Activated CD8-positive, alpha-beta T cell treated with anti-CD3 and anti-CD28 coated beads, Interleukin-2, amount 10 ng/mL, durations not matched to agents 7 days and 5 days (primary cell): ENCODE measurements at regions of chr21 and their contacts with region 1.

Region 1: DNA sequence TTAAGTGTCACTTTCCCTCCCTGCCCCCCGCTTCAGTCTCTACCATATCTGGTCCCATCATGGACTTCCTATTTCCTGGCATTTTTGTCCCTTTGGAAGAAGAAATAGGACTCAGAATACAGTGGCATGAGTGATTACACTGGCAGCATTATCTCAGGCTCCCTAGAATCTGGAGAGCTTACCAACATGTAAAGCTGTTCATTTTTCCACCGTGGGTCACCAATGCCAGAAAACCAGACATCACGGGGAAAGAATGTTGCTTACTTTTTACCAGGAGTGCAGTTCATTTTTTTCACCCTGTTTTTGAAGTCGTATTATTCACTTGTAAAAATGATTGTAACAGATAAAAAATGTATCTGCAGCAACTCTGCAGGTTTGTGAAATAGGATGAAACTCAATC is 44.8 kb downstream of the BACH1 start:
- DNase-seq: no peak
- ATAC-seq: no peak
- H3K4me3 Mint-ChIP-seq: no peak overlapping the region
- H3K27ac Mint-ChIP-seq: no peak overlapping the region
- H3K4me1 Mint-ChIP-seq: peaks cover 15% of the 10 kb centered on the region
- H3K27me3 Mint-ChIP-seq: no peaks in the 10 kb centered on the region

Region 2: DNA sequence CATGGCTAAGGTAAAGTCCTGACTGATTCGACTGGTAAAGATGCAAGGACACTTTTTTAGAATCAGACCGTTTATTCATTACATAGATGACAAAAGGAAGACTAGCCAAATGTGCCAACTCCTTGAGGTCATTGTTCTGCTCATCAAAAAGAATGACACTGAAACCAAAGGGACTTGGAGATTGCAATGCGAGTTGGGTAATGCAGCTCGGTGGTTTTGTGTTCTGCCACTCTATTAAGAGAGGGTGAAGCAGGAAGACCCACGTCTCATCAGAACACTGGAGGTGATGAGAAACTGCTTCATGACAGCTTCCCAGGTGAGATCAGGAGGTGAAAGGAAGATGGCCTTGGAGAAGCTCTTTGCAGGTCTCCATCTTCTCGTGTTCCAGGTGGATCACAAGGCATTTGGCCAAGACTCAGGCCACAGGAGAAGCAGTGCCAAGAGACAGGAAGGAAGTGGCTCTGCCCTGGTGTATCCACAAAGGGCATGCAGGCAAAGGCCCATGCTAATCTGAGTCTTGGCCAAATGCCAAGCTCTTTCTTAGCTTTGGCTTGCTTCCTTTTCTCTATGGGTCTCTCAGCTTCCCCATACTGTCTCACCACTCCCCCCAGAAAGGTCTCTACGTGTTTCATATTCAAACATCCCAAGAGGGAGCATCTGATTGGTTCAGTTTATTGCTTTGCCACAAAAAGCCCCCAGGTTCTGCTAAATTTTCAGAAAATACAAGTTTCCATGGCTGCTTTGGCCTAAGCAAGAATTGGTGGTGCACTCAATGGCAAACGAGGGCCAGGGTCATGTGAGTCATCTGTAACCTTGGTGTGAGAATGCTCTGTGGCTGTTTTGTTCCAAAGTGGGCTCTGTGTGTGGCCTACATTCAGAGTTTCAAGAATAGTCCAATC is 264.4 kb before region 1 on chr21:
- CTCF ChIA-PET with region 1: interaction called, 13 read pairs
- POLR2A ChIA-PET with region 1: no interaction called
- DNase-seq: peak; percentile 49
- ATAC-seq: peak; percentile 41
- H3K4me3 Mint-ChIP-seq: peak overlapping the region; percentile 30
- H3K27ac Mint-ChIP-seq: peak overlapping the region; percentile 90
- H3K4me1 Mint-ChIP-seq: peaks cover 47% of the 10 kb centered on the region
- H3K27me3 Mint-ChIP-seq: no peaks in the 10 kb centered on the region

Region 3: DNA sequence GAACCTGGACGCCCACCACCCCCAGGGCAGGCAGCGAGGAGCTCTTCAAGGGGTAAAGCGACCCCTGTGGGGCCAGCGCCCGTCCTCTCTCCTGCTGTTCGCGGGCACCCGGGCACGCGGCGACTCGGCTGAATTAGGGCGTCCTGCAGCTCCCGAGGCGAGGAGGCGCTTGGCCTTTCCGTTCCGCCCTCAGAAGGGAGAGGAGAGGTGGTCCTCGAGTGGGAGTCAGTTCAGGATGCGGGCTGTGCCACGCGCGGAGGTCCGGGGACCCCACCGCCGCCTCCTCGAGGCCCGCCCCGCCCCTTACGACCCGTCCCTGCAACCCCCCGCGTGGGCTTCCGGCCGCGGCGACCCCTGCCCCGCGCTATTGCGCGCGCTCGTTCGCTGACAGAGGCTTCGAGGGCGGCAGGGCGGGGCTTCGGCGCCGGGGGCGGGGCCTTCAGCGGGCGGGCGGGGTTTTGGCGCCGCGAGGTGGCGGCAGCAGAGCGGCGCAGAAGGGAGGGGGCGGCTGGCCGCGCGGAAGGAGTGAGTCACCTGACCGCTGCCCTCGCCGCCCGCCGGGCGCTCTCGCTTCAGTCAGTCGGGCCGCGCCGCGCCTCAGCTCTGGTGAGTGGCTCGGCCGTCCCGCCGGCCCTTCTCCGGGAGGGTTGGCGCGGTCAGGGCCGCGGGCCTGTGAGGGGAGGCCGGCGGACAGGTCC is 45.0 kb before region 1 on chr21 and contains the start of gene BACH1:
- CTCF ChIA-PET with region 1: interaction called, 24 read pairs
- POLR2A ChIA-PET with region 1: interaction called, 5 read pairs
- DNase-seq: peak; percentile 88
- ATAC-seq: peak; percentile 87
- H3K4me3 Mint-ChIP-seq: peak within 1 kb of the TSS; percentile 86
- H3K27ac Mint-ChIP-seq: peak within 1 kb of the TSS; percentile 91
- H3K4me1 Mint-ChIP-seq: peaks cover 52% of the 10 kb centered on the region
- H3K27me3 Mint-ChIP-seq: no peaks in the 10 kb centered on the region
- total RNA-seq, gene BACH1: 23.5 to 23.7 TPM

Region 4: DNA sequence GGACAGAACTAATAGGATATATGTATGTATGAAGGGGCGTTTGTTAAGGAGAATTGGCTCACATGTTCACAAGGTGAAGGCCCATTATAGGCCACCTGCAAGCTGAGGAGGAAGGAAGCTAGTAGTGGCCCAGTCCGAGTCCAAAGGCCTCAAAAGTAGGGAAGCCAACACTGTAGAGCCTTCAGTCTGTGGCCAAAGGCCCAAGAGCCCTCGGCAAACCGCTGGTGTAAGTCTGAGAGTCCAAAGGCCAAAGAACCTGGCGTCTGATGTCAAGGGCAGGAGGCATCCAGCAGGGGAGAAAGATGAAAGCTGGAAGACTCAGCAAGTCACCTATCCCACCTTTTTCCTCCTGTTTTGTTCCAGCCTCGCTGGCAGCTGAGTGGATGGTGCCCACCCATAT is 20.3 kb before region 1 on chr21:
- CTCF ChIA-PET with region 1: no interaction called
- POLR2A ChIA-PET with region 1: no interaction called
- DNase-seq: no peak
- ATAC-seq: no peak
- H3K4me3 Mint-ChIP-seq: no peak overlapping the region
- H3K27ac Mint-ChIP-seq: no peak overlapping the region
- H3K4me1 Mint-ChIP-seq: no peaks in the 10 kb centered on the region
- H3K27me3 Mint-ChIP-seq: no peaks in the 10 kb centered on the region

Region 5: GRCh38 chr21:29384683-29385322 is 41.3 kb after region 1 on chr21:
- CTCF ChIA-PET with region 1: no interaction called
- POLR2A ChIA-PET with region 1: no interaction called
- DNase-seq: no peak
- ATAC-seq: no peak
- H3K4me3 Mint-ChIP-seq: no peak overlapping the region
- H3K27ac Mint-ChIP-seq: no peak overlapping the region
- H3K4me1 Mint-ChIP-seq: no peaks in the 10 kb centered on the region
- H3K27me3 Mint-ChIP-seq: no peaks in the 10 kb centered on the region